ENCODE measurements at regions of chrX and their contacts with region 1.

Region 1: GRCh38 chrX:136588041-136588788 is 56.2 kb downstream of the VGLL1 start:
- DNase-seq: no peak
- H3K4me3 Mint-ChIP-seq: peak overlapping the region; percentile 4
- H3K27ac Mint-ChIP-seq: peak overlapping the region; percentile 89
- H3K4me1 Mint-ChIP-seq: peaks cover 59% of the 10 kb centered on the region
- H3K27me3 Mint-ChIP-seq: no peaks in the 10 kb centered on the region

Region 2: DNA sequence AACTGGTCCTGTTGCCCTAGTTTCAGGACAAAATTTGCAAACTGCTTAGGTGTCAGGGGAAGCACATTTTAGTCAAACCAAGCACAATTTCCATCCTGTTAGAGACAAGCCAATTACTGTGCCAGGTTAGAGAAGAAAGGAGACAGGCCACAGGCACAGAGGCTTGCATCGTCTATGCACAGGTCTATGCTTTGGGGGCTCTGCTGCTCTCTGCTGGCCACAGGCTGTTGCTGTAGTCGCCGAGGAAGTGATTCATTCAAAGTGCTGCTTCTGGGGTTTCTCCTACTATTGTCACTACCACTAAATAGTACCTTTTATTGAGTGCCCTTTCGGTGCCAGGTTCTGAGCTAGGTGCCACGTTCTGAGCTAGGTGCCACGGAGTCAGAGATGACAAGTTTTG is 10.7 kb before region 1 on chrX:
- intact Hi-C with region 1: loop called (anchors 1 kb)
- DNase-seq: peak; percentile 63
- H3K4me3 Mint-ChIP-seq: peak overlapping the region; percentile 42
- H3K27ac Mint-ChIP-seq: peak overlapping the region; percentile 80
- H3K4me1 Mint-ChIP-seq: peaks cover 42% of the 10 kb centered on the region
- H3K27me3 Mint-ChIP-seq: no peaks in the 10 kb centered on the region

Region 3: DNA sequence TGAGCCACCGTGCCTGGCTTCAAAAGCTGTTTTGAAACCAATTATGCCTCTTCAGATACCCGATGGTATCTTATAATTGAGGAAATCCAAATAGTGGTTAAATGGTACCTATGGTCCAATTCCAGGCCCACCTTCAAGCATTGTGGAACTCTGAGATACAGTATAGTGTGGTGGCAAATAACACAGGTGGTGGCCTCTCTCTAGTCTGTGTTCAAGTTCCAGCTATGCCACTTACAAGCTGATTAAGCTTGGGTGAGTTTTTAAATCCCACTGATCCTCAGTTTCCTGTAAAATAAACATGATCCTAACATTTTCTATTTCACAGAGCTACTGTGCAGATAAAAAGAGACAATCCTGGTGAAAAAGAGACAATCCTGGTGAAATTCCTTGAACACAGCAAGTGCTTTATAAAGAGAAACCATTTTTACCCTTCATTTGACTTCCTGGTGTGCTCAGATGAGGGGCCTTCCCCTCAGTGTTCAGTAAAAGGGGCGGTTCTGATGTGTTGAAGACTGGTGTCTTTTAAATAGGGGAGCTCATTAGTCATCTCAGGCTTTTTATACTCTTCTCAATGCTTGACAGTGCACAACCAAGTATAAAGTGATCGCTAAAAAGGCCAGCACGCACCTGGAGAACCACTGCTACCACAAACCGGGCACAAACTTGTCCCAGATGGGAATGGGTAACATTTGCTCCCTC is 28.9 kb after region 1 on chrX:
- intact Hi-C with region 1: loop called (anchors 2 kb)
- DNase-seq: no peak
- H3K4me3 Mint-ChIP-seq: peak overlapping the region; percentile 47
- H3K27ac Mint-ChIP-seq: peak overlapping the region; percentile 85
- H3K4me1 Mint-ChIP-seq: peaks cover 53% of the 10 kb centered on the region
- H3K27me3 Mint-ChIP-seq: no peaks in the 10 kb centered on the region

Region 4: GRCh38 chrX:136646602-136647239 is 58.5 kb after region 1 on chrX:
- intact Hi-C with region 1: loop called (anchors 2 kb)
- DNase-seq: no peak
- H3K4me3 Mint-ChIP-seq: peak overlapping the region; percentile 99
- H3K27ac Mint-ChIP-seq: peak overlapping the region; percentile 94
- H3K4me1 Mint-ChIP-seq: peaks cover 57% of the 10 kb centered on the region
- H3K27me3 Mint-ChIP-seq: no peaks in the 10 kb centered on the region

Region 5: GRCh38 chrX:137051978-137052642 is 463.9 kb after region 1 on chrX:
- intact Hi-C with region 1: loop called (anchors 10 kb)
- DNase-seq: peak; percentile 71
- H3K4me3 Mint-ChIP-seq: peak overlapping the region; percentile 87
- H3K27ac Mint-ChIP-seq: peak overlapping the region; percentile 40
- H3K4me1 Mint-ChIP-seq: peaks cover 11% of the 10 kb centered on the region
- H3K27me3 Mint-ChIP-seq: peaks cover 28% of the 10 kb centered on the region

Region 6: GRCh38 chrX:137067147-137067546 is 478.9 kb after region 1 on chrX:
- intact Hi-C with region 1: no loop called
- DNase-seq: no peak
- H3K4me3 Mint-ChIP-seq: no peak overlapping the region
- H3K27ac Mint-ChIP-seq: no peak overlapping the region
- H3K4me1 Mint-ChIP-seq: no peaks in the 10 kb centered on the region
- H3K27me3 Mint-ChIP-seq: peaks cover 5% of the 10 kb centered on the region